Cardiac septum (tissue), 1 donor: ENCODE measurements at regions of chr4 and their contacts with region 1.

Region 1: DNA sequence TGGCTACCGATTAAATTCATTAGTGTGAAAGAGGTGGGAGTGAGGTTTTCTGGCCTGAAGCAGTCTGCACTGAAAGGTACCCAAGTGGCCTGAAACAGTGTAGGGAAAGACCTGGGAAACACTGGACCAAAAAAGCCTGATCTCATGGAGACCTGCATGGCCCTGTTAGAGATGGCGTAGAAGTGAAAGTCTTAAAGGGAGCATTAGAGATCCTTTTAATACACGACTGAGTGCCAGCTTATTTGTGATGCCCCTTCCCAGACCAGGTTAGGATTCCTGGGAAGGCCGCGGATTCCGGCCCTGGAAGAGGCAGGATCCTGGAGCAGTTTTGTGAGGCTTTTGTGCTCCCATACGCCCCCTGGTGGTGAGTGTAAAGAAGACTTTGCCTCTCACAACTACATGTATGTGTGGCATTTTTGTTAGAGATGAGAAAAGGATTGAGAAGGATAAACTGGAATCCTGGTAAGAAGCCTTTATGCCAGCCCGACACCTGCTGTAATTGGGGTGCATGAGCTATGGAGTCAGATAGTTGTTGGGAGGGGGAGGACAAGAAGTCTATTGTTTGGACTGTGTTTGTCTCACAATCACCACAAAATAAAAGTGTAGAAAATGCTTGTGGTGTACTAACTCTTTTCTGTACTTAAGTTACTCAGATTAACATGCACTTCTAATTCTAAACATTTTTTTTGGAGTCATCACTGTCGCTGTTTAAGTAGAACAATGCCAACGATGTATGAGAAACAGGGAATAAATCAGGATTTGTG is 54.0 kb downstream of the JADE1 start:
- DNase-seq: peak; percentile 89

Region 2: GRCh38 chr4:128287871-128288688 is 575.4 kb before region 1 on chr4:
- intact Hi-C with region 1: loop called (anchors 10 kb)
- DNase-seq: peak; percentile 100

Region 3: GRCh38 chr4:128427832-128428366 is 435.6 kb before region 1 on chr4:
- intact Hi-C with region 1: loop called (anchors 10 kb)
- DNase-seq: no peak

Region 4: DNA sequence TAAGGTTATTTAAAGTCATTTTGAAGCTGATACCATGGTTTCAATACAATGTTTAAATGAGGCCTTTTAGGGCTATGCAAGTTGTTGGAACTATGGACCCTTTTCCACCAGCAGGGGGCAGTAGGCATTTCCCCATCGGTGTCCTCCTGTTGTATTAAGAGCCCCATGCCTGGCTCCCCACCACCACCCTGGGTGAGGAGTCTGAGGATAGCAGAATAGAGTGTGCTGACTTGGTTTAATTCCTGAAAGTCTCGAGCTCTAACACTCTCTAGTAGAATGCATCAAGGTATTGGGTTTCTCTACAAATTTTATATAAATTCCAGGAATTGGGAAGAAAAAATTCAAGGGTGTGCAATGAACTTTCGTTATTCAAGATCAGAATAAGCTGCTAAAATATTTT is 288.8 kb before region 1 on chr4:
- intact Hi-C with region 1: loop called (anchors 5 kb)
- DNase-seq: no peak

Region 5: DNA sequence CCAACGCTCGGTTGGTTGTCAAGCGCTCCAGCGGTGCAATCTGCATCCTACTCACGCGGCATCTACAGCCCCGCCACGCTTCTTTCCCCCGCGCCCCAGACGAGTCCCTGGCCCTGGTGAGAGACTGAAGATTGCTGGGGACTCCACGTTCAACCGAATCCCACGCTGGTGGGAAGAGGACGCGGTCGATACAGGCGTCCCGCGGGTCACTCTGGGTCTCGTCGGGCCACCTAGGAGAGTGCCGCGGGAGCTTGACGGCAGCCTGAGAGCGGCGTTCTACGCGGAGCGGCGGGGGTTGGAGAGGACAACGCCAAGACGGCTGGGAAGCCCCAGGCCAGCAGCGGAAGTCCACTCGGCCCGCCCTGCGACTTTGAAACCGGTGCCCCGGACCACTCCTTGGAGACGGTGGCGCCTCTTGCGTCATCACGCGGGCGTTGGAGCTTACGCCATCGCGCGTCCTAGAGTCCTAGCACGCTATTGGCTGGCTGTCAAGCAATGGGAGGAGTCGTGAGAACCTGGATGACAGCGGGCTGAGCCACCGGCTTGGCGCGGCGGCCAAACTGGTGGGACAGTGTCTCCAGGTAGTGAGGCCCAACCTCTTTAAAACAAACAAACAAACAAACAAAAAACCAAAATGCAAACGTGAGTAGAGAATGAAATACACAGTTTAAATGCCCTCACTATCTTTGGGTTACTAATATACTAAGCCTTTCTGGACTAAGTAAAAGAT is 229.9 kb after region 1 on chr4 and contains the start of gene SCLT1:
- intact Hi-C with region 1: loop called (anchors 5 kb)
- DNase-seq: peak; percentile 100
- total RNA-seq, gene SCLT1: 9.6 TPM